GM10248 (cell line): ENCODE measurements at regions of chr12 and their contacts with region 1.

Region 1: DNA sequence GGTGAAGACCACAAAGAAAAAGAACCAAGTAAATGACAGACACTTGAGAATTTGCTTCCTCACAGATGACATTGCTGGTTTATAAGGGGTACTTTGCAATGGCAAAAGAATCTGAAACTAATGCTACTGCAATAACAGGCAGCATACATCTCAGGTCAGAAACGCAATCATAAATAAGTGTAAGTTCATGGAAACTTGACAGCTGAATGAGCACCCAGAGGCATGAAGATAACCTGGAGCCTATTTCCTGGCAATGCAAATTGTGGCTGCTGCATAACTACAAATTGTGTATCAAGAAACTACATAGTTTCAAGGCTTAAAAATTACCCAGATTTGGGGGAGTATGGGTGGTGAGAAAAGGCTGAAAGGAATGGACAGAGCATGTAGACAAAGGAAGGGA is 8.5 kb upstream of the MYO1A start:
- DNase-seq: no peak
- CTCF ChIP-seq: no peak

Region 2: DNA sequence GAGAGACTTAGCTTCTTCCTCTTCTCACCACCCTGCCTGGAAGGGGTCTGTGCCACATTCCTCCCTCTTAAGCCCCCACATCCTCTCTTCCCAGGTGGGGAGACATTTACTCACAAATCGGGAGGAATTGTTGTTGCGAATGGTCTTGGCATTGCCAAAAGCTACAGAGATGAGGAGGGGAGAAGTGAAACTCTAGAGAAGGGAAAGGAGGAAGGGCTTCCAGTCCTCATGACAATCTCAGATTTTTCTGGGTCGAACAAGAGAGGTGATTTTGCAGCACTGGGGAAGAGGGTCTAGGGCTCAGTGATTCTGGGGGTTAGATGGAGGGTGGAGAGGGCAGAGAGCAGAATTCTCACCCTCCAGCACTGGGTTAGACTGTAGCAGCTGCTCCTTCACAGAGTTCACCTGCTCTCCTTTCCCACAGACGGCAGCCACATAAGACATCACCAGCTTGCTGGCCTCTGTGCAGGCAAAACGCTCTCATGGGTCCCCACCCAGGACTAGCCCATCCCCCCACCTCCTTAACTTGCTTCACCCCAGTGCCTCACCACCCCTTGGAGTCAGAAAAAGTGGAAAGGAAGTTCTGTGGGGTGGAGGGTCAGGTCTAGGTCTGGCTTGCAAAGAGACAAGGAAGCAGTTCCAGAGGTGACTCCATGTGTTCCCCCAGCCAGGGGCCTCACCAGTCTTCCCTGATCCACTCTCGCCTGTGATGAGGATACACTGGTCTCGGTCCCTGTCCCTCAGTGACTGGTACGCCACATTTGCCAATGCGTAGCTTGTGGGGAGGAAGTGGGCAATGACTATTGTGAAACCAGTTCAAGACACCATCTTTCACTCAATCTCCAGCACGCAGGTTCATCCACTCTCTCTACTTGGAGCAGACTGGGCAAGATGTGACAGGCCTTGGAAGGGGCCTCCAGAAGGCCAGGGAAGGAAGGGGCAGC is 11.2 kb before region 1 on chr12:
- CTCF ChIA-PET with region 1: interaction called, 64 read pairs
- POLR2A ChIA-PET with region 1: no interaction called
- DNase-seq: no peak
- CTCF ChIP-seq: no peak

Region 3: GRCh38 chr12:57151741-57152630 is 93.5 kb after region 1 on chr12:
- CTCF ChIA-PET with region 1: no interaction called
- POLR2A ChIA-PET with region 1: no interaction called
- DNase-seq: no peak
- CTCF ChIP-seq: no peak